Activated CD4-positive, alpha-beta memory T cell treated with anti-CD3 and anti-CD28 coated beads, Interleukin-2, amount 10 ng/mL, durations not matched to agents 7 days and 5 days (primary cell): ENCODE measurements at regions of chr19 and their contacts with region 1.

Region 1: DNA sequence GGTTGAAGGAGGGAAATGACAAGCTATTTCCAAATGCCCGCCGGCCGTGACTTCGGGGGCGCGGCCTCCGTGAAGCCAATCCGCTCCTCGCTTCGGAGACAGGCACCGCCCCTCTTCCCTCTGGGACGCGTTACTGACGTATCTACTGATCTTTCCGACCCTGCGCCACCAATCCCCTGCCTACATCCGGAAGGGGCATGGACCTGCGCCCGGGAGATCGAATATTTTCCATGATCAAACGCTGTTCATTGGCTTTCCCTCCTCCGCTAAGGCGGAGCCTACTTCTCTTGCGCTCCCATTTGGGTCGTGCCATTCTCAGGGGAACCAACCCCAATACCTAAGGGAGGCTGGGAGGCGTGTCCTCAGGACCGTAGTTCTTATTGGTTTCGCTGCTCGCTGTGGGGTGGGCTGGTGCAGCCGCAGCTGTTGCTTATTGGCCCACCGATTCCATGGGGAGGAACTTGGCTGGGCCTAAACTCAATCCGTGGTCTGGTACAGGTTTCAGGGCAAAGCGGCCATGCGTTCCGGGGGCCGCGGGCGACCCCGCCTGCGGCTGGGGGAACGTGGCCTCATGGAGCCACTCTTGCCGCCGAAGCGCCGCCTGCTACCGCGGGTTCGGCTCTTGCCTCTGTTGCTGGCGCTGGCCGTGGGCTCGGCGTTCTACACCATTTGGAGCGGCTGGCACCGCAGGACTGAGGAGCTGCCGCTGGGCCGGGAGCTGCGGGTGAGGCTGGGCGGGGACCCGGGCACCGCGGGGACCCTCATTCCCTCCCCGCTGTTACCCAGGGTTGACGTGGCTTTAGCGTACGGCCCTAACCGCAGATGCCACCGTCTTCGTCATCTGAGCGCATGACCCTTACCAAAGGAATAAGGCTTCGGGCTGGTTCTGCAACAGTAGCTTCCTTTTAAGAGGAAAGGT is at the start of gene QPCTL:
- DNase-seq: peak; percentile 98
- H3K4me3 Mint-ChIP-seq: peak within 1 kb of the TSS; percentile 90
- H3K27ac Mint-ChIP-seq: peak within 1 kb of the TSS; percentile 89
- H3K4me1 Mint-ChIP-seq: peaks cover 29% of the 10 kb centered on the region
- H3K27me3 Mint-ChIP-seq: no peaks in the 10 kb centered on the region
- total RNA-seq, gene QPCTL: 9.1 to 11.9 TPM

Region 2: DNA sequence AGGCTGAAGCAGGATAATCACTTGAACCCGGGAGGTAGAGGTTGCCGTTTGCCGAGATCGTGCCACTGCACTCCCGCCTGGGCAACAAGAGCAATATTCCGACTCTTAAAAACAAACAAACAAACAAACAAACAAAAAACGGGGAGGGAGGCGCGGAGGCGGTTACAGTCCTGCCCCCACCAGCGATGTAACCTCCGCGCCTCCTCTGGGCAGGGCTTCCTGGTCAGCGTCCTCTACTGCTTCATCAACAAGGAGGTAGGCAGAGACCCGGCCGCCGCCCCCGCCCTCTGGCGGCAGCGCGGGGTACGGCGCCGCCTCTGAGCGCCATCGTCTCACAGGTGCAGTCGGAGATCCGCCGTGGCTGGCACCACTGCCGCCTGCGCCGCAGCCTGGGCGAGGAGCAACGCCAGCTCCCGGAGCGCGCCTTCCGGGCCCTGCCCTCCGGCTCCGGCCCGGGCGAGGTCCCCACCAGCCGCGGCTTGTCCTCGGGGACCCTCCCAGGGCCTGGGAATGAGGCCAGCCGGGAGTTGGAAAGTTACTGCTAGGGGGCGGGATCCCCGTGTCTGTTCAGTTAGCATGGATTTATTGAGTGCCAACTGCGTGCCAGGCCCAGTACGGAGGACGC is 10.9 kb before region 1 on chr19:
- CTCF ChIA-PET with region 1: interaction called, 106 read pairs
- POLR2A ChIA-PET with region 1: interaction called, 27 read pairs
- DNase-seq: peak; percentile 93
- H3K4me3 Mint-ChIP-seq: peak overlapping the region; percentile 78
- H3K27ac Mint-ChIP-seq: peak overlapping the region; percentile 76
- H3K4me1 Mint-ChIP-seq: peaks cover 23% of the 10 kb centered on the region
- H3K27me3 Mint-ChIP-seq: peaks cover 6% of the 10 kb centered on the region

Region 3: GRCh38 chr19:45705115-45705514 is 12.7 kb after region 1 on chr19:
- CTCF ChIA-PET with region 1: interaction called, 14 read pairs
- POLR2A ChIA-PET with region 1: interaction called, 15 read pairs
- DNase-seq: no peak
- H3K4me3 Mint-ChIP-seq: no peak overlapping the region
- H3K27ac Mint-ChIP-seq: no peak overlapping the region
- H3K4me1 Mint-ChIP-seq: peaks cover 9% of the 10 kb centered on the region
- H3K27me3 Mint-ChIP-seq: no peaks in the 10 kb centered on the region

Region 4: GRCh38 chr19:45710356-45711130 is 18.1 kb after region 1 on chr19:
- CTCF ChIA-PET with region 1: interaction called, 70 read pairs
- POLR2A ChIA-PET with region 1: interaction called, 31 read pairs
- DNase-seq: no peak
- H3K4me3 Mint-ChIP-seq: no peak overlapping the region
- H3K27ac Mint-ChIP-seq: no peak overlapping the region
- H3K4me1 Mint-ChIP-seq: peaks cover 12% of the 10 kb centered on the region
- H3K27me3 Mint-ChIP-seq: no peaks in the 10 kb centered on the region

Region 5: GRCh38 chr19:45717166-45717982 is 24.9 kb after region 1 on chr19:
- CTCF ChIA-PET with region 1: interaction called, 70 read pairs
- POLR2A ChIA-PET with region 1: interaction called, 31 read pairs
- DNase-seq: peak; percentile 99
- H3K4me3 Mint-ChIP-seq: peak overlapping the region; percentile 96
- H3K27ac Mint-ChIP-seq: peak overlapping the region; percentile 88
- H3K4me1 Mint-ChIP-seq: peaks cover 47% of the 10 kb centered on the region
- H3K27me3 Mint-ChIP-seq: no peaks in the 10 kb centered on the region

Region 6: GRCh38 chr19:45730389-45731288 is 38.2 kb after region 1 on chr19 and contains the start of gene FBXO46:
- CTCF ChIA-PET with region 1: interaction called, 14 read pairs
- POLR2A ChIA-PET with region 1: interaction called, 4 read pairs
- DNase-seq: peak; percentile 97
- H3K4me3 Mint-ChIP-seq: peak within 1 kb of the TSS; percentile 94
- H3K27ac Mint-ChIP-seq: peak within 1 kb of the TSS; percentile 79
- H3K4me1 Mint-ChIP-seq: peaks cover 34% of the 10 kb centered on the region
- H3K27me3 Mint-ChIP-seq: no peaks in the 10 kb centered on the region
- total RNA-seq, gene FBXO46: 34.4 to 36.4 TPM